ENCODE measurements at regions of chr7 and their contacts with region 1.

Region 1: GRCh38 chr7:37201003-37201875 is 247.4 kb downstream of the ELMO1 start:
- DNase-seq: peak; percentile 64
- H3K4me3 ChIP-seq: no peak overlapping the region
- H3K27ac ChIP-seq: peak overlapping the region; percentile 30
- H3K4me1 ChIP-seq: peaks cover 26% of the 10 kb centered on the region
- CTCF ChIP-seq: peak; percentile 89

Region 2: GRCh38 chr7:36986429-36987362 is 214.5 kb before region 1 on chr7:
- CTCF ChIA-PET with region 1: no interaction called
- POLR2A ChIA-PET with region 1: no interaction called
- intact Hi-C with region 1: loop called (anchors 5 kb)
- DNase-seq: peak; percentile 50
- H3K4me3 ChIP-seq: no peak overlapping the region
- H3K27ac ChIP-seq: no peak overlapping the region
- H3K4me1 ChIP-seq: peaks cover 9% of the 10 kb centered on the region
- CTCF ChIP-seq: peak; percentile 91

Region 3: DNA sequence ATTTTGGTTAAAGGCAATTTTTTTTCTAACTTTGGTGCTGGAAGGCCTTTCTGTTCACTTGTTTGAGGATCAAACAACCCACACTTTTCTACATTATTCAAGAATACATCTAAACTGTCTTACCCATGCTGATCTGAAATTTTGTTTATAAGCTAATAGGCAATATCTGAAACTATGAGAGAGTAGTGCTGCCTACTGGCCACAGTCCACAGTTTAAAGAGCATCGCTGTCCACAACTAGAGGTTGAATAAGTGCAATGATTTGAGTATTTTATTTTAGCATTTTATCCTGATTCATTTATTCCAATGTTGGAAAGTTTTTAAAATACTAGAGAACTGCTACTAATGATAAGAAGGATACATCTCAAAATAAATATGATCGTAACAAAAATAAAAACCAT is 59.5 kb before region 1 on chr7:
- CTCF ChIA-PET with region 1: no interaction called
- POLR2A ChIA-PET with region 1: no interaction called
- intact Hi-C with region 1: no loop called
- DNase-seq: no peak
- H3K4me3 ChIP-seq: no peak overlapping the region
- H3K27ac ChIP-seq: no peak overlapping the region
- H3K4me1 ChIP-seq: peaks cover 12% of the 10 kb centered on the region
- CTCF ChIP-seq: no peak

Region 4: DNA sequence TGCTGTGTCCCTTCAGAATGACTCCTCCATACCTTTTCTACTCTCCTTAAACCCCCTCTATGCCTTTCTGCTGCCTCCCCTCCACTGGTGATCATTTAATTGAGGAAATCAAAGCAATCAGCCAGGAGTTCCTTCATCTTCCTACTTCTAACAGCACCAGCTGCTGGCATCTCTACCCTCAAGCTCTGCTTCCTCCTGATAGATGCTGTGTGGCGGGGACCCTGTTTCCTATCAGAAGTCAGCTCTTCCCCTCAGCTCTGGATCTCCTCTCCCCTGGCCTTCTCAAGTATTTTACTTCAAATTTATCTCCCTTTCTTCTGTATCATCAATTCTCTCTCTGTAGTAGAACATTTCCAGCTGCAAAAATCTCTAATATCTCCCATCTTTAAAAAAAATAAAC is 63.8 kb after region 1 on chr7:
- CTCF ChIA-PET with region 1: no interaction called
- POLR2A ChIA-PET with region 1: no interaction called
- intact Hi-C with region 1: no loop called
- DNase-seq: no peak
- H3K4me3 ChIP-seq: no peak overlapping the region
- H3K27ac ChIP-seq: no peak overlapping the region
- H3K4me1 ChIP-seq: no peaks in the 10 kb centered on the region
- CTCF ChIP-seq: no peak

Measured in OCI-LY7 (cell line).